ENCODE measurements at regions of chr11 and their contacts with region 1.

Region 1: DNA sequence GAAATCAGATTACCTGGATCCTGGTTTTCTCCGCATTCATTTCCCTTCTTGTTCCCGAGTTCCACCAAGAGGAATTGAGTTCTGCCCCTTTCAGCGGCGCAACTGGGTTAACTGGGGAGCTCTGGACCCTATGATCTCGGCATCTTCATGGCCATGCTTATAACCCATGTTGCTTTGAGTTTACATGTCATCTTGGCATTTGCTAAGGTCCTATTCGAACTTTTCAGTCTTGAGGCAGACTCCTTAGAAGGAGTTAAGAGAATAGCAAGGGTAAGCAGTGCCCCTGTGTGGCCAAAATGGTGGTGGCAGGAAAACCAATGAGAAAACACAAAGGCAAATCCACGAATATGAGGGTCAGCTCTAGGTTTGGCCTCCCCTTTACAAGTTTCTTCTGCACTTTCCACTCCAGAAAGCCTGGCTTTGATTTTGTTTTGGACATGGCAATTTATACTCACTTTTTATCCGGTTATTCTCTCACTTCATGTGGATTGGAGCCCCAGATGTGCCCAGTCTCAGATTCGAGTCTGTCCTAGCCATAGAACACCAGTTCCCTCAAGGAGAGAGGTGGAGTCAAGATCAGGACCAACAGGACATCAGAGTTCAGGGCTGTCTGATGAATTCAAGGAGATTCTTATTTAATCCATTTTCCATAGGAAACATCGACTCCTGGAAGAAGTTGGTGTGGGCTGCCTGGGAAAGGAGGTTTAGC is 55.3 kb upstream of the FBXO3 start:
- DNase-seq: peak; percentile 73 to 81
- ATAC-seq: peak; percentile 88 to 95
- H3K4me3 ChIP-seq: peak overlapping the region; percentile 49
- H3K27ac ChIP-seq: peak overlapping the region; percentile 38 to 75; a peak in 5 of 6 replicates
- H3K4me1 ChIP-seq: no peaks in the 10 kb centered on the region
- CTCF ChIP-seq: peak; percentile 90
- EP300 ChIP-seq: no peak
- POLR2A ChIP-seq: no peak
- RAD21 ChIP-seq: peak; percentile 91 to 94

Region 2: DNA sequence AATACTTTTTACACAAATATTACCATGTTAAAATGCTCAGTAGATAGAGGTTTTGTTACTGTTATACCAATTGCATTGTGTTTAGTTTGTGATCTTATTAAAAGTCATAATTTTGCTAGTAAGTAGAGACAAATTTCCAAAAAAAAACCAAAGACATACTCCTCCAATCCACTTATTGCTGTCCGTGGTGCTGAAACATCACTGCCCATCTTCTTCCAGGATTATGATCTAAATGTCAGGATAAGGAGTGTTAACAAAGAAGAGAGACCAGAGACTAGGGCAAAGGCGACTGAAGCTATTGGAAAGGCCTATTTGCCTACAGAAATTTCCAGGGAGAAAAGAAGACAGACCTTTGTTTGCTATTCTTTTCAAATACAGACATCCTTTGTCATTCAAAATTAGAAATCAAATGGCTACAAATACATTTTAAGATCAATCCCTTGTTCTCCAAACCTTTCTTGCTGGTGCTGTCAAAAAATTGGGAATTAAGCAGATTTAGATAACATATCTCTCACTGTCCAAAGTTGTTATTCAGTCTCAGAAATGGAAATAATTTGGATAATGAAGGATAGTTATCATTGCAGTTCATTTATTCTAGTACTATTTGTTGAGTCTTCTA is 328.6 kb before region 1 on chr11:
- CTCF ChIA-PET with region 1: no interaction called
- POLR2A ChIA-PET with region 1: no interaction called
- DNase-seq: peak in 1 of 2 experiments; percentile 25
- ATAC-seq: no peak
- H3K4me3 ChIP-seq: no peak overlapping the region
- H3K27ac ChIP-seq: no peak overlapping the region
- H3K4me1 ChIP-seq: no peaks in the 10 kb centered on the region
- CTCF ChIP-seq: no peak
- EP300 ChIP-seq: no peak
- POLR2A ChIP-seq: no peak
- RAD21 ChIP-seq: no peak

Region 3: GRCh38 chr11:33790040-33790439 is 39.5 kb before region 1 on chr11:
- CTCF ChIA-PET with region 1: interaction called, 10 read pairs
- POLR2A ChIA-PET with region 1: no interaction called
- DNase-seq: no peak
- ATAC-seq: no peak
- H3K4me3 ChIP-seq: no peak overlapping the region
- H3K27ac ChIP-seq: no peak overlapping the region
- H3K4me1 ChIP-seq: no peaks in the 10 kb centered on the region
- CTCF ChIP-seq: no peak
- EP300 ChIP-seq: no peak
- POLR2A ChIP-seq: no peak
- RAD21 ChIP-seq: no peak

Region 4: GRCh38 chr11:33808228-33808828 is 21.3 kb before region 1 on chr11:
- CTCF ChIA-PET with region 1: interaction called, 239 read pairs
- POLR2A ChIA-PET with region 1: no interaction called
- DNase-seq: peak; percentile 76 to 81
- ATAC-seq: peak; percentile 90 to 99
- H3K4me3 ChIP-seq: no peak overlapping the region
- H3K27ac ChIP-seq: no peak overlapping the region
- H3K4me1 ChIP-seq: no peaks in the 10 kb centered on the region
- CTCF ChIP-seq: peak; percentile 89
- EP300 ChIP-seq: no peak
- POLR2A ChIP-seq: no peak
- RAD21 ChIP-seq: peak; percentile 80 to 84

Region 5: GRCh38 chr11:33842236-33842915 is 12.8 kb after region 1 on chr11:
- CTCF ChIA-PET with region 1: interaction called, 18 read pairs
- POLR2A ChIA-PET with region 1: no interaction called
- DNase-seq: no peak
- ATAC-seq: no peak
- H3K4me3 ChIP-seq: no peak overlapping the region
- H3K27ac ChIP-seq: no peak overlapping the region
- H3K4me1 ChIP-seq: no peaks in the 10 kb centered on the region
- CTCF ChIP-seq: no peak
- EP300 ChIP-seq: no peak
- POLR2A ChIP-seq: no peak
- RAD21 ChIP-seq: no peak

Region 6: GRCh38 chr11:33881651-33882503 is 52.3 kb after region 1 on chr11:
- CTCF ChIA-PET with region 1: no interaction called
- POLR2A ChIA-PET with region 1: no interaction called
- DNase-seq: no peak
- ATAC-seq: no peak
- H3K4me3 ChIP-seq: no peak overlapping the region
- H3K27ac ChIP-seq: no peak overlapping the region
- H3K4me1 ChIP-seq: no peaks in the 10 kb centered on the region
- CTCF ChIP-seq: no peak
- EP300 ChIP-seq: no peak
- POLR2A ChIP-seq: no peak
- RAD21 ChIP-seq: no peak

Region 7: DNA sequence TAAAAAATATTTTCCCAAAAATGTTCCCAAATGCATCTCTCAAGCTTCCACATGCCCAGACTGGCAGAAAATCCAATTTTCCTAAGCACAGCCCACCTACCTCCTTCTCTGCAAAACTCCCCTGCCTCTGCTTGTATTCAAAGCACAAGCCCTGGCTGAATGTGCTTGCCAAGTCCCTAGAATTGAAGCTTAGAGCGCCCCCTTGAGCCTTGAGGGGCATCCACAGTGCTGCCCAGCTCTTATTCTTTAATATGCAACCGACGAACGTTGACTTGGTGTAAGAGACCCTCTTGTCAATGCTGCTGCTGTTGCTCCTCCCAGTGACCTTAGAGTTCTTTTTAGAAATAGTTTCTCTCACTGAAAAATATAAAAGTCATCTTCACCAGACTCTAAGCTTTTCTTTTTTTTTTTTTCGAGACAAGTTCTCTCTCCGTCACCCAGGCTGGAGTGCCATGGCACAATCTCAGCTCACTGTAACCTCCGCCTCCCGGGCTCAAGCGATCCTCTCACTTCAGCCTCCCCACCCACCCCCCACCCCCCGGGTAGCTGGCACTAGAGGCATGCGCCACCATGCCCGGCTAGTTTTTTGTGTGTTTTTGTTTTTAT is 158.5 kb after region 1 on chr11:
- CTCF ChIA-PET with region 1: interaction called, 19 read pairs
- POLR2A ChIA-PET with region 1: no interaction called
- DNase-seq: peak; percentile 41 to 88
- ATAC-seq: peak; percentile 90 to 99
- H3K4me3 ChIP-seq: no peak overlapping the region
- H3K27ac ChIP-seq: no peak overlapping the region
- H3K4me1 ChIP-seq: no peaks in the 10 kb centered on the region
- CTCF ChIP-seq: peak; percentile 67
- EP300 ChIP-seq: no peak
- POLR2A ChIP-seq: no peak
- RAD21 ChIP-seq: peak; percentile 59 to 78